IMR-90 (cell line): ENCODE measurements at regions of chr9 and their contacts with region 1.

Region 1: DNA sequence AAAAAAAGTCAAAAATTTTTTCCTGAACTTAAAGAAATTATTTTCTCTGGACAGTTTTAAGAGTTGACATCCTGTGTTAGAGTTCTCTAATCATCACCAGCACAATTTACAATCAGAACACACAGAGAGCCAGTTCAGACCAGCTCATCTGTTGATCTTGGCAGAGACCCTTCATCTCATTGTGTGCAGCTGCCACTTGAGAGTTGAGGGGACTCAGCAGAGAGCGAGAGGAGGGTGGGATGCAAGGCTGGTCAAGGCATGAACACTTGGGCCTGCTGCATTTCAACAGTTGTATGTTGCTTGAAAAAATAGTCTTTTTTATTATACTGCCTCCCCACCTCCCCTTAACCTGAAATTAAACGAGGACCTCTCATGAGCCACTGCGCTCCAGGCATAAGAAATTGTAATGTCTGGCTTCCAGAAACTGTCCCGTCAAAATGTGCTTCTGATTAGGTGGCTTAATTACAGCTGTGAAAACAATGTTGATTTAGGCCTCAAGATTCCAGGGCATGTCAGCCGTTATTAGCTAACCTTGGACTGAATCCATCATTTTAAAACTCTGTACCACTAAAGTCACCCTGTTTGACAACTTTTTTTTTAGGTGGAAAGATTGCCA is 383.6 kb downstream of the CCDC171 start:
- DNase-seq: peak; percentile 40
- ATAC-seq: no peak
- H3K4me3 ChIP-seq: no peak overlapping the region
- H3K27ac ChIP-seq: no peak overlapping the region
- H3K4me1 ChIP-seq: peaks cover 2% of the 10 kb centered on the region; the same call in 1 of the 2 replicates
- H3K27me3 ChIP-seq: no peaks in the 10 kb centered on the region
- CTCF ChIP-seq: no peak
- POLR2A ChIP-seq: no peak
- RAD21 ChIP-seq: no peak

Region 2: GRCh38 chr9:15972760-15973159 is 36.3 kb after region 1 on chr9:
- CTCF ChIA-PET with region 1: no interaction called
- POLR2A ChIA-PET with region 1: no interaction called
- dilution Hi-C with region 1: no loop called
- in situ Hi-C with region 1: no loop called
- intact Hi-C with region 1: loop called (anchors 5 kb)
- DNase-seq: no peak
- ATAC-seq: no peak
- H3K4me3 ChIP-seq: no peak overlapping the region
- H3K27ac ChIP-seq: no peak overlapping the region
- H3K4me1 ChIP-seq: no peaks in the 10 kb centered on the region
- H3K27me3 ChIP-seq: no peaks in the 10 kb centered on the region
- CTCF ChIP-seq: no peak
- POLR2A ChIP-seq: no peak
- RAD21 ChIP-seq: no peak